Activated naive CD4-positive, alpha-beta T cell treated with anti-CD3 and anti-CD28 coated beads for 36 hours (primary cell): ENCODE measurements at regions of chr16 and their contacts with region 1.

Region 1: DNA sequence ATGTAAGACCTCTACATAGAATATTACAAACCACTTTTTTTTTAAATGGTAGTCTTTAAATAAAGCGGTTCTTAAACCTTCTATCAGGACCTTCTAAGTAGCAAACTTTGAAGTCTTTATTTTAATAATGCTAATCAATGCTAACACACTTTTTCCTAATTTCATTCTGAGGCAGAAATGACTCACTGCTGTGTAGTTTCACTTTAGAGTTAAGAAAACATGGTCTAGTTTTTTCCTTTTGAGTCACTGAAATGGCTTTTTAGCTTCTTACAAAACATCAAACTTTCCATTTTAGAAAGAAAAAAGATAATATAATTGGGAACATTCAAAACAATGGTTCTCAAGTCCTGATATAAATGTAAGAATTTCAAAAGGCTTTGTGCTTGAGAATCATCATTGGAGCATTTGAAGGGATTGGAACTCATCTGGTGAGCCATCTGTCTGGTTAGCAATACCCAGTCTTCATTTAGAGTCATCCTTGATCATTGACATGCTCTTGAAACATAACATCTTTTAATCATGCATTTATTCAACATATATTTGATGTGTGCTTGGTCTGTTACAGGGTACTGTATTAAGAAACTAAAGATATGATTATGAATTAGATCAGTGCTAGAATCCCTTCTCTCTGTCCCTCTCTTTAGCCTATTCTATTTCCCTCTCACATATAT is 258.3 kb upstream of the MON1B start:
- DNase-seq: no peak
- H3K4me3 Mint-ChIP-seq: no peak overlapping the region
- H3K27ac Mint-ChIP-seq: no peak overlapping the region
- H3K4me1 Mint-ChIP-seq: peaks cover 4% of the 10 kb centered on the region
- H3K27me3 Mint-ChIP-seq: no peaks in the 10 kb centered on the region

Region 2: DNA sequence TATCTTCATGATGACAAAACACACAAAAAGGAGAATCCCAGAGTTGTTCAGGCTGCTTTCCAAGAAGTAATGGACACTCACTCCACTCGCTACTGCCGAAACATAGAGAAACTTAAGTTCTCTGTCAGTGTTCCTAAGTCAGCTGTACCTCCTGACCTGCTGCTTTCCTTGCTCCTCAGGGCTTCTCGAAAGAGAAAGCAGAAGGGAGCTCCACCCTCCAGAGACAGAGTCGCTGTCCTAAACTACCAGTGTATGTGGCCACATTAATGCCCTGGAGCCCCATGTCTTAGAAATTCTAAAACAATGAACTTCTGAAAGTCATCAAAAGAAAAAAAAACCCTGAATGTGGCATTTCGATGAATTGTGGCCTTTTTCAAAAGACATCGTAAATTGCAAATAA is 132.5 kb before region 1 on chr16:
- CTCF ChIA-PET with region 1: no interaction called
- intact Hi-C with region 1: loop called (anchors 5 kb)
- DNase-seq: no peak
- H3K4me3 Mint-ChIP-seq: no peak overlapping the region
- H3K27ac Mint-ChIP-seq: no peak overlapping the region
- H3K4me1 Mint-ChIP-seq: peaks cover under 1% of the 10 kb centered on the region
- H3K27me3 Mint-ChIP-seq: no peaks in the 10 kb centered on the region

Region 3: GRCh38 chr16:76976101-76976500 is 43.4 kb after region 1 on chr16:
- CTCF ChIA-PET with region 1: no interaction called
- intact Hi-C with region 1: loop called (anchors 2 kb)
- DNase-seq: no peak
- H3K4me3 Mint-ChIP-seq: no peak overlapping the region
- H3K27ac Mint-ChIP-seq: no peak overlapping the region
- H3K4me1 Mint-ChIP-seq: no peaks in the 10 kb centered on the region
- H3K27me3 Mint-ChIP-seq: no peaks in the 10 kb centered on the region